ENCODE measurements at regions of chr7 and their contacts with region 1.

Region 1: GRCh38 chr7:105013221-105013815 is 687 bp upstream of the KMT2E start:
- DNase-seq: peak; percentile 96

Region 2: DNA sequence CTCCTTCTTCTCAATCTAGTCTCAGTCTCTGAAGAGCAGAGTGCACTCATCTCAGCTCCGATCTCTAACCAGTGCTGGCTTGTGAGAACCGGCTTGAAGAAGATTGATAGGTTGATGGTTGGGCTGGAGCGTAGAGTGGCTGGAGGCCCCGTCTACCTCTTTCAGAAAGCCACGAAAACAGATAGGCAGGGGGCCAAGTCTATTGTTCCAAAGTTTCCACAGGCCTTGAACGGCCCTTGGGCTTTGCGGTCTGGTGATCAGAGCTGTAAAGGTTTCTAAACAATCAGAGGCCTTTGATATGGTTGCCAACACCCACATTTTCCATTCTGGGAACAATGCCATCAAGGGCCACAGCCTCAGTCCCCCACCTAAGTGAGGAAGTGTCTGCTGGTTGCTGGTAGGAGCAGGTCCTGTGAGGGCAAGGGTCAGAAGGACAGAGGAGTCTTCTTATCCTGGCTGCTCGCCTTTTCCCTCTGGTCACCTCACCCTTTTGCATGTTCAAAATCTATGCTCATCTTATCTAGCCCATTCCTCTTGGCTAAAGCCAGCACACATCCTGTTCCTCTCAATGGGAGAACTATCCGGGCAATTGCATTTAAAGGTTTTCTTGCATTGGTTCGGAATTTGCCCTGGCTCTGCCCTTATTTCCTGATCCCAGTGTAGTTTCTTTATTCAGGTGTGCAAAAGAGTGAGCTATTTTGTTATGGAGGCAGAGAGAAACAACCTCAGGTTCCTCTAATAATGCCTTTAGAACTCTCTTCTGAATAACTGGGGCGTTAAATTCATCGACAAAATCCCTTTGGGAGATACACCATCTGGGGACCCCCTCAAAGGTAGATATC is 69.6 kb before region 1 on chr7:
- intact Hi-C with region 1: loop called (anchors 2 kb)
- DNase-seq: peak; percentile 79

Region 3: GRCh38 chr7:105245398-105246114 is 232.2 kb after region 1 on chr7:
- intact Hi-C with region 1: loop called (anchors 10 kb)
- DNase-seq: no peak

Measured in cardiac septum (tissue), 1 donor.